ENCODE measurements at regions of chr19 and their contacts with region 1.

Region 1: DNA sequence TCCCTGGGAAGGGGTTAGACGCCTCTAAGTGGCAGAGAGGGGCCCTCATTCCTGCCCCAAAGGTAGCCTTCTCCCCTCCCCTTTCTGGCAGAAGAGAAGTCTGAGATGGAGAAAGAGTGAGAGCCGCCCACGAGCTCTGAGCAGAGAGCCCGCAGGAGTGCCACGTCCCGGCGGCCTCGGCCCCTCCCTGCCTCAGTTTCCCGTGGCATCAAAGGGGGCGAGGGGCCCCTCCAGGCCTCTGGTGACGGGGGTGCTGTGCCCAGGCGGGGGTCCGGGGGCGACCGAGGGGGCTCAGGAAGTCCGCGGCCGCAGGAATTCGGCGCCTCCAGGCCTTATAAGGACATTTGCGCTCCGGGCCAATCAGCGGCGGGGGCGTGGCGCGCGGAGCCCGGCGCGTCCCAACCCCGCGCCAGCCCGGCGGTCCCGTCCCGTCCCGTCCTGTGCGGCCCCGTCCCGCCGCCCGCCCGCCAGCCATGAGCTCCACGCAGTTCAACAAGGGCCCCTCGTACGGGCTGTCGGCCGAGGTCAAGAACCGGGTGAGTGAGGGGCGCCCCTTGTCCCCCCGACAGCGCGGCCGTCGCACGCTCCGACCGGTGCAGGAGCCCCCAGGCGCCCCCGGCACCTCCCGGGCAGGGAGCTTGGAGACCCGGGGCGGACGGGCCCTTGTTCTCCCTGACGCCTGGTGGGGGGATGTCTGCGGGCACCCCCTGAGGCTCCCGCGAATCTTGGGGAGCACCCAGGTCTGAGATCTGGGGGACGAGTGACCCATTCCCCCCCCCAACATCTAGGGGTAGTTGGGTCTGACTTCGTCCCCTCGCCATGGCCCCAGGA is at the start of gene CNN2:
- DNase-seq: peak in 1 of 2 experiments; percentile 75
- H3K4me3 ChIP-seq: peak within 1 kb of the TSS; percentile 91
- H3K27ac ChIP-seq: peak within 1 kb of the TSS; percentile 32; the same call in 1 of the 2 replicates
- H3K4me1 ChIP-seq: peaks cover 9% of the 10 kb centered on the region; the same call in 1 of the 2 replicates
- H3K27me3 ChIP-seq: no peaks in the 10 kb centered on the region
- CTCF ChIP-seq: no peak
- total RNA-seq, gene CNN2: 168 and 206 TPM in 2 replicates

Region 2: GRCh38 chr19:1009041-1009975 is 17.1 kb before region 1 on chr19:
- CTCF ChIA-PET with region 1: no interaction called
- POLR2A ChIA-PET with region 1: no interaction called
- intact Hi-C with region 1: no loop called
- DNase-seq: no peak
- H3K4me3 ChIP-seq: no peak overlapping the region
- H3K27ac ChIP-seq: no peak overlapping the region
- H3K4me1 ChIP-seq: no peaks in the 10 kb centered on the region
- H3K27me3 ChIP-seq: no peaks in the 10 kb centered on the region
- CTCF ChIP-seq: no peak

Region 3: DNA sequence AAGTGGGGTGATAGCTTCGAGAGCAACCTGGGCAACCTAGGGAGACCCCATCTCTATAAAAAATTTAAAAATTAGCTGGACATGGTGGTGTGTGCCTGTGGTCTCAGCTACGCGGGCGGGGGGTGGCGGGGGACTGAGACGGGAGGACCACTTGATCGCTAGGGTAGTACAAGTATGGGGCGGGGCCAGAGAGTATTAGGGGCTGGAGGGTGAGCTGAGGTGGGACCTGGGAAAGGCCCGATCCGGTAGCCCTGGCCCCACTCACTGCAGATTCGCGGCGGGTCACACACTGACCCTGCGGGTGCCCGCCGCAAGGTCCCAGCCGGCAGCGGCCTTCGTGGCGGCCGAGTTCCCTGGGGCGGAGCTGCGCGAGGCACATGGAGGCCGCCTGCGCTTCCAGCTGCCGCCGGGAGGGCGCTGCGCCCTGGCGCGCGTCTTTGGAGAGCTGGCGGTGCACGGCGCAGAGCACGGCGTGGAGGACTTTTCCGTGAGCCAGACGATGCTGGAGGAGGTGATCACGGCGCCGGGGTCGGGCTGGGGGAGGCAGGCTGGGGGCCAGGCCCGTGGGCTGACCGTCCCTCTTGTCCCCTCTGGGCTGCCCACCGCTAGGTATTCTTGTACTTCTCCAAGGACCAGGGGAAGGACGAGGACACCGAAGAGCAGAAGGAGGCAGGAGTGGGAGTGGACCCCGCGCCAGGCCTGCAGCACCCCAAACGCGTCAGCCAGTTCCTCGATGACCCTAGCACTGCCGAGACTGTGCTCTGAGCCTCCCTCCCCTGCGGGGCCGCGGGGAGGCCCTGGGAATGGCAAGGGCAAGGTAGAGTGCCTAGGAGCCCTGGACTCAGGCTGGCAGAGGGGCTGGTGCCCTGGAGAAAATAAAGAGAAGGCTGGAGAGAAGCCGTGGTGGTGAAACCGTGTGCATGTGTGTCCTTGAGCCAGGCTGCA is 38.5 kb after region 1 on chr19:
- CTCF ChIA-PET with region 1: no interaction called
- POLR2A ChIA-PET with region 1: interaction called, 13 read pairs
- intact Hi-C with region 1: no loop called
- DNase-seq: peak in 1 of 2 experiments; percentile 54
- H3K4me3 ChIP-seq: peak overlapping the region; percentile 15; the same call in 1 of the 2 replicates
- H3K27ac ChIP-seq: peak overlapping the region; percentile 57
- H3K4me1 ChIP-seq: peaks cover 19% of the 10 kb centered on the region
- H3K27me3 ChIP-seq: no peaks in the 10 kb centered on the region
- CTCF ChIP-seq: peak; percentile 62; the same call in 1 of the 2 replicates

Region 4: GRCh38 chr19:1076951-1077350 is 50.5 kb after region 1 on chr19:
- CTCF ChIA-PET with region 1: no interaction called
- POLR2A ChIA-PET with region 1: interaction called, 21 read pairs
- intact Hi-C with region 1: no loop called
- DNase-seq: no peak
- H3K4me3 ChIP-seq: no peak overlapping the region
- H3K27ac ChIP-seq: no peak overlapping the region
- H3K4me1 ChIP-seq: 0 out of 2 replicates have a peak, but pooled peaks cover 9% of the 10 kb centered on the region
- H3K27me3 ChIP-seq: no peaks in the 10 kb centered on the region
- CTCF ChIP-seq: no peak